Naive thymus-derived CD8-positive, alpha-beta T cell (primary cell): ENCODE measurements at regions of chr16 and their contacts with region 1.

Region 1: GRCh38 chr16:69754469-69755310 is at the start of gene NOB1:
- DNase-seq: peak; percentile 91 to 99 (median 97)
- ATAC-seq: peak; percentile 98
- H3K4me3 Mint-ChIP-seq: peak within 1 kb of the TSS; percentile 96 to 100 (median 100)
- H3K27ac Mint-ChIP-seq: peak within 1 kb of the TSS; percentile 98 to 100 (median 99)
- H3K4me1 Mint-ChIP-seq: peaks cover 8 to 35% (median 28%) of the 10 kb centered on the region in 4 donors
- H3K27me3 Mint-ChIP-seq: no peaks in the 10 kb centered on the region
- polyA plus RNA-seq, gene NOB1: 35.1 to 60.3 (median 48.6) TPM

Region 2: DNA sequence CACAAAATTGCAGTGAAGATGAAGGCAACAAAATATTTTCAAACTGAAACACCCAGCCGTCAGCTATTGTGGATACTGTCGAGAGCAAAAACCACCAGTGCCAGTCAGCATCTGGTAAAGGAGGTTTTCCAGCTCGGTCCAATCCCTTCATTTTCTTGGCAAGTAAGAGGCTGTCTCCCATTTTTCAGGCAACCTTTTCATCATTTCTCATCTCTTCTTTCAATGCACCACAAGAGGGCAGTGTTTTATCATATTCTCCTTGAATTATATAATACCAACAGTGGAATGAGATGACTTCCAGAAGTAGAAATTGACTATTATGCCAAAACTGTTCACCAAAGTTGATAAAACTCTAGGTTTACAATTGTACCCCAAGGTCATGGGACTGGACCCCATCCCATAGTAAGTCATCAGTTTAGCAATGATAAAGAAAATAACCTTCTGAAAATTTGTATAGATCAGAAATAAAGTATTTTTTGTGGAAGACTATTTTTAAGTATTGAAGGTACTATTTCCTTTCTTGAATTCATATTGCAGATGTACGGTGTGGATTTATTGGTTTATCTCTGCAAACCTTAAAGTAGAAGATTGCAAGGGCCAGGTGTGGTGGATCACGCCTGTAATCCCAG is 45.1 kb before region 1 on chr16:
- POLR2A ChIA-PET with region 1: interaction called, 38 read pairs
- DNase-seq: peak in 4 of 10 donors; percentile 6 to 65 (median 60)
- ATAC-seq: peak; percentile 60 to 76
- H3K4me3 Mint-ChIP-seq: no peak overlapping the region
- H3K27ac Mint-ChIP-seq: peak overlapping the region in 4 of 10 donors; percentile 1 to 38 (median 28)
- H3K4me1 Mint-ChIP-seq: peaks cover 0 to 5% (median 1%) of the 10 kb centered on the region in 4 donors
- H3K27me3 Mint-ChIP-seq: no peaks in the 10 kb centered on the region